ENCODE measurements at regions of chr11 and their contacts with region 1.

Region 1: DNA sequence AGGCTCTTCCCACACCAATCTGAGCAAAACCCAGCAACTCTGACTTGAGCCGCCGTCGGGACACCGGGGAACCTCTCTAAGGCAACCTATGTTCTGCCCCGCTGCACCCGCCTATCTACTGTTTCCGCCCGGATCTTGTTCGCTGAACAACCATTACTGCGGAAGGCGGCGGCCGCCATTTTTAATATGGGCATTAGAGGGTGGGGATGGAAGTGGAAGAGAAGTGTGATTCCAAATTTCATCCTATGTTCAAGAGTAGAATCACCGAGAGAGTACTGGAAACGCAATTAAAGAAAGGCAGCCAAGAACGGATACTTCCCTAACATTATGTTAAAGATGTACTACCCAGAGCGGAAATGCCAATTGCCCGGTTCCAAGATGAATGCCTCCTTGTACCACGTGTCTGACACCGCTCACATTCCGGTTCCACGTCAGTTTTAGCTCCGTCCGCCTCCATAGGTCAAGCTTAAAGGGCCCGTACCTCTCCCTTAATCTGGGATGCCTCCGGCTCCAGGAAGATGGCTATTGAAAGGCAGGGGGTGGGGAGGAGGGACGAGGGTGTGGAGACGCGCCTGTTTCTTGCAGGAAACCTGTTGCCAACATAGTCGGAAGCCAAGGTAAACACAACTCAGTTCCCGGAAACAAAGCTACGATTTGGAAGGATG is at the start of gene DPAGT1:
- DNase-seq: peak; percentile 66 to 92 (median 80)
- ATAC-seq: peak; percentile 86 to 87
- H3K4me3 Mint-ChIP-seq: peak within 1 kb of the TSS; percentile 91 to 99 (median 97)
- H3K27ac Mint-ChIP-seq: peak within 1 kb of the TSS; percentile 96 to 100 (median 100)
- H3K4me1 Mint-ChIP-seq: peaks cover 18 to 59% (median 47%) of the 10 kb centered on the region in 4 donors
- H3K27me3 Mint-ChIP-seq: no peaks in the 10 kb centered on the region
- polyA plus RNA-seq, gene DPAGT1: 28.7 to 30.8 (median 29.0) TPM

Region 2: DNA sequence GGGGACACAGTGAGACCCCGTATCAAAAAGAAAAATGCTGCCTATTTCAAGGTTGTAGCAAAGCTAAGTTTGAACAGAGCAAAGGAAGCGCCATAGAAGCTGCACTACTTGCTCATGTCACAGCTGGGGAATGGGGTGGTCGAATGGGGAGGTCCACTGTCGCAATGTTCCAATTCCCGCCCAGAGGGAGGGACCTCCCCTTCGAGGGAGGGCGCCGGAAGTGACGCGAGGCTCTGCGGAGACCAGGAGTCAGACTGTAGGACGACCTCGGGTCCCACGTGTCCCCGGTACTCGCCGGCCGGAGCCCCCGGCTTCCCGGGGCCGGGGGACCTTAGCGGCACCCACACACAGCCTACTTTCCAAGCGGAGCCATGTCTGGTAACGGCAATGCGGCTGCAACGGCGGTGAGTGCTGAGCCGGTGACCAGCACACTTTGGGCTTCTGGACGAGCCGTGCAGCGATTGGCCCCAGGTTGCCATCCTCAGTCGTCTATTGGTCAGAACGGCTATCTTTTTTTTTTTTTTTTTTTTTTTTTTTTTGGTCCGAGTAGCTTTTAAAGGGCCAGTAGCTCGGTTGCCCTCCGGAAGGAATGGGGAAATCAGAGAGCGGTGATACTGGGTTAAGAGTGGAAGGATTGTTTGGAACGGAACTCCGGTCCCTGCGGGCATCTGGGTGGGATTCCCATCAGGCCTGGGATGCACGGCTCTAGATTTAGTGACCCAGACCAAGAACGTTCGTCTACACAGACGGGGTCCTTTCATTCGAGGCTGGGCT is 17.0 kb before region 1 on chr11 and contains the start of gene HMBS:
- POLR2A ChIA-PET with region 1: interaction called, 26 read pairs
- DNase-seq: peak; percentile 79 to 97 (median 90)
- ATAC-seq: peak; percentile 89 to 95
- H3K4me3 Mint-ChIP-seq: peak within 1 kb of the TSS; percentile 87 to 97 (median 94)
- H3K27ac Mint-ChIP-seq: peak within 1 kb of the TSS; percentile 90 to 97 (median 96)
- H3K4me1 Mint-ChIP-seq: peaks cover 5 to 34% (median 25%) of the 10 kb centered on the region in 4 donors
- H3K27me3 Mint-ChIP-seq: no peaks in the 10 kb centered on the region
- polyA plus RNA-seq, gene HMBS: 20.0 to 32.7 (median 24.3) TPM

Region 3: GRCh38 chr11:119115484-119116234 is 13.8 kb after region 1 on chr11:
- POLR2A ChIA-PET with region 1: interaction called, 130 read pairs
- DNase-seq: peak in 5 of 10 donors; percentile 29 to 74 (median 57)
- ATAC-seq: peak; percentile 89 to 95
- H3K4me3 Mint-ChIP-seq: peak overlapping the region; percentile 79 to 91 (median 85)
- H3K27ac Mint-ChIP-seq: peak overlapping the region; percentile 92 to 99 (median 98)
- H3K4me1 Mint-ChIP-seq: peaks cover 25 to 54% (median 38%) of the 10 kb centered on the region in 4 donors
- H3K27me3 Mint-ChIP-seq: no peaks in the 10 kb centered on the region

Region 4: DNA sequence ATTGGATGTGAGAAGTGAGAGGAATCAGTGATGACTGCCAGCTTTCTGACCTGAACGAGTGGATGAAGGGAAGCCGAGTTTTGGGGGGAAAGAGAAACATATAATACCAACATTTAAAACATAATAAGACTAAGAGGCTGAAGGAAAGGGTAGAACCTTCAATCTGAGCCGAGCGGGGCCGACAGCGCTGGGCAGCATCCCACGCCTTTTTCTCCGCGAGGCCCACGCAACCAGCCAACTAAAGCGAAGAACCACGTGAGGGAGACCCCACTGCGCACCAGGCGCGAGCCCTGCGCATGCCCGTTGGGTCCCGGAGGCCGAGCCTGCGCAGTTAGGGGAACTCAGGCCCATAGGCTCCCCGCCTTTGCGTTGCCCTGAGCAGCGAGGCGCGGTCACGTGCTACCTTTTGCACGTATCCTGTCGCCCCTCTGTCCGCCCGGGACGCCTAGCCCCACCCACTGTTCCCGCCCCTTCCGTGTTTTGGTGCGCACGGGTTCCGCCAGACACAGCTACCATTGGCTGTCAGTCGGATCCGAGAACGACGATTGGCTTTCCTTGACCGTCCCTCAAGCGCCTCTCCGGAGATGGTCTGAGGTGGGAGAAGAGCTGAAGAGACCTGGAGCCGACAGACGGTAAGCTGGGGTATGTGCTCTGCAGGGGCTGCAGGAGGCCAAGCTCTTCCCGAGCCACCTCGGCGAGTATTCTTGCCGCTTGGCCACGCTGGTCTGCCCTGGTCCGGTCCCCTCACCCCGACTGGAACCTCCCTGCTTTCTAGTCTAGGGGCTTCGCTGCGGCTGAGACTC is 19.3 kb after region 1 on chr11 and contains the start of gene HINFP:
- POLR2A ChIA-PET with region 1: interaction called, 130 read pairs
- DNase-seq: peak; percentile 94 to 100 (median 99)
- ATAC-seq: peak; percentile 94 to 97
- H3K4me3 Mint-ChIP-seq: peak within 1 kb of the TSS; percentile 84 to 99 (median 92)
- H3K27ac Mint-ChIP-seq: peak within 1 kb of the TSS; percentile 95 to 98 (median 96)
- H3K4me1 Mint-ChIP-seq: peaks cover 26 to 46% (median 43%) of the 10 kb centered on the region in 4 donors
- H3K27me3 Mint-ChIP-seq: no peaks in the 10 kb centered on the region
- polyA plus RNA-seq, gene HINFP: 7.3 to 24.9 (median 7.5) TPM